T-cell (primary cell): ENCODE measurements at regions of chr6 and their contacts with region 1.

Region 1: DNA sequence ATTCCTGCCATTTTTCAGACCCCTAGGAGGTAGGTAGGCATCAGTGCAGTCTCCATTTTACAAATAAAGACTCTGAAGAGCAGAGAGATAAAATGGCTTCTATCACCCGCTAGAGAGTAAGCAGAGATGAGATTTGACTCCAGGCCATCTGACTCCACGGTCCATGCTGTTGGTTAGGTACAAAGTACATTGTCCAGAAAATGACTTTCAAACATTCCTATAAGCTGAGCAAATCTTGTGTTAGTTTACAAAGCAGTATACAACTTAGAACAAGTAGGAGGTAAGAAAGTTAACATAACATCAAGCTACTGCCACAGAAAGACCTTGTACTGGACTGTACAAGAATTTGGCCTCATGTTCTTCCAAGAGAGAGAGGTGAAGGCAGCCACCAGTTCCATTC is 14.9 kb downstream of the BTN1A1 start:
- DNase-seq: no peak
- ATAC-seq: no peak
- H3K4me3 ChIP-seq: no peak overlapping the region
- H3K4me3 Mint-ChIP-seq: no peak overlapping the region
- H3K27ac ChIP-seq: no peak overlapping the region
- H3K27ac Mint-ChIP-seq: no peak overlapping the region
- H3K4me1 ChIP-seq: peaks cover under 1 to 2% of the 10 kb centered on the region in 2 experiments
- H3K4me1 Mint-ChIP-seq: peaks cover 2 to 3% (median 3%) of the 10 kb centered on the region in 3 donors
- H3K27me3 ChIP-seq: no peaks in the 10 kb centered on the region
- H3K27me3 Mint-ChIP-seq: no peaks in the 10 kb centered on the region

Region 2: GRCh38 chr6:25556516-25556915 is 958.5 kb before region 1 on chr6:
- CTCF ChIA-PET with region 1: no interaction called
- POLR2A ChIA-PET with region 1: interaction called in 1 of 2 experiments, 15 read pairs
- DNase-seq: peak; percentile 30 to 85 (median 66)
- ATAC-seq: peak in 3 of 4 experiments; percentile 45 to 56 (median 48)
- H3K4me3 ChIP-seq: no peak overlapping the region
- H3K4me3 Mint-ChIP-seq: no peak overlapping the region
- H3K27ac ChIP-seq: no peak overlapping the region
- H3K27ac Mint-ChIP-seq: no peak overlapping the region
- H3K4me1 ChIP-seq: no peaks in the 10 kb centered on the region
- H3K4me1 Mint-ChIP-seq: peaks cover 0 to 2% (median 0%) of the 10 kb centered on the region in 3 donors
- H3K27me3 ChIP-seq: no peaks in the 10 kb centered on the region
- H3K27me3 Mint-ChIP-seq: no peaks in the 10 kb centered on the region

Region 3: GRCh38 chr6:26401987-26402658 is 112.9 kb before region 1 on chr6 and contains the start of gene BTN3A1:
- CTCF ChIA-PET with region 1: no interaction called
- POLR2A ChIA-PET with region 1: no interaction called
- DNase-seq: peak; percentile 17 to 82 (median 47)
- ATAC-seq: peak; percentile 87 to 92 (median 87)
- H3K4me3 ChIP-seq: peak within 1 kb of the TSS; percentile 85 to 86
- H3K4me3 Mint-ChIP-seq: peak within 1 kb of the TSS; percentile 98 to 99 (median 99)
- H3K27ac ChIP-seq: peak within 1 kb of the TSS; percentile 91
- H3K27ac Mint-ChIP-seq: peak within 1 kb of the TSS; percentile 99
- H3K4me1 ChIP-seq: peaks cover 33 to 41% of the 10 kb centered on the region in 2 experiments
- H3K4me1 Mint-ChIP-seq: peaks cover 52 to 68% (median 59%) of the 10 kb centered on the region in 3 donors
- H3K27me3 ChIP-seq: no peaks in the 10 kb centered on the region
- H3K27me3 Mint-ChIP-seq: no peaks in the 10 kb centered on the region
- total RNA-seq, gene BTN3A1: 205 to 270 (median 210) TPM

Region 4: GRCh38 chr6:26421259-26422144 is 93.5 kb before region 1 on chr6:
- CTCF ChIA-PET with region 1: interaction called in 1 of 2 experiments, 10 read pairs
- POLR2A ChIA-PET with region 1: no interaction called
- DNase-seq: peak in 34 of 35 experiments; percentile 5 to 81 (median 28)
- ATAC-seq: peak; percentile 92 to 99 (median 92)
- H3K4me3 ChIP-seq: peak overlapping the region; percentile 96
- H3K4me3 Mint-ChIP-seq: no peak overlapping the region
- H3K27ac ChIP-seq: peak overlapping the region; percentile 72
- H3K27ac Mint-ChIP-seq: peak overlapping the region in 1 of 2 donors; percentile 62
- H3K4me1 ChIP-seq: peaks cover 4 to 18% of the 10 kb centered on the region in 2 experiments
- H3K4me1 Mint-ChIP-seq: peaks cover 0 to 8% (median 4%) of the 10 kb centered on the region in 3 donors
- H3K27me3 ChIP-seq: no peaks in the 10 kb centered on the region
- H3K27me3 Mint-ChIP-seq: peaks cover 0 to 3% of the 10 kb centered on the region in 2 donors

Region 5: DNA sequence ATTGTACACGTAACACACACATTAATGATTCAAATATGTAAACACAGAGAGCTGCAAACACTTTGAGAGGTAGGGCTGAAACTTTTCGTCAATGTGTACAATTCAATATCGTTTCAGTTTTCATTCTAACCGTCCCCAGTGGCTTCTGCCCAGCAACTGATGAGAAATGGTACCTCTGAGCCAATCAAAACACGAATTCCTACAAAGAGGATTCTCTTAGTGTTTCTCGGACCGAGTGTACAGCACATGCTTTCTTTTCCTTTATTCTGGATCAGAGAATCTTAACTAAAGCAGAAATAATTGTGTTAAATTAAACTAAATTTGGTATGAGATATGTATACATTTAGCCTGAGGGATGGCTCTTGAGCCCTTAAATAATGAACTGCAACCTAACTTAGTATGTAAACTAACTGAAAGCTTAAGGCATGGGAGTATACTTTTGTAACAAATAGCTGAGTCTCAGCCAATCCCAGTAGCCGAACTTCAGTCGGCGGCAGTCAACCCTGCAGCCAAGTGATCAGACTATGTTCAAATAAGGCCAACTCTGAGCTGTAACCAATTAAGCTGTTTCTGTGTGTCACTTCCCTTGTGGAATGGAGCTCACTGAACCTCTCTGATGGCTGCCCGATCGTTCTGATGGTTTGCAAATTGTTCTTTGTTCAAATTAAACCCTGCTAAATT is 41.1 kb before region 1 on chr6:
- CTCF ChIA-PET with region 1: no interaction called
- POLR2A ChIA-PET with region 1: interaction called in 1 of 2 experiments, 12 read pairs
- DNase-seq: peak; percentile 50 to 93 (median 81)
- ATAC-seq: peak; percentile 95 to 96 (median 96)
- H3K4me3 ChIP-seq: peak overlapping the region; percentile 44 to 52
- H3K4me3 Mint-ChIP-seq: peak overlapping the region; percentile 88 to 99 (median 97)
- H3K27ac ChIP-seq: peak overlapping the region; percentile 90
- H3K27ac Mint-ChIP-seq: peak overlapping the region; percentile 100
- H3K4me1 ChIP-seq: peaks cover 25 to 43% of the 10 kb centered on the region in 2 experiments
- H3K4me1 Mint-ChIP-seq: peaks cover 63 to 66% (median 65%) of the 10 kb centered on the region in 3 donors
- H3K27me3 ChIP-seq: no peaks in the 10 kb centered on the region
- H3K27me3 Mint-ChIP-seq: no peaks in the 10 kb centered on the region

Region 6: GRCh38 chr6:26489996-26490964 is 24.7 kb before region 1 on chr6:
- CTCF ChIA-PET with region 1: no interaction called
- POLR2A ChIA-PET with region 1: no interaction called
- DNase-seq: no peak
- ATAC-seq: no peak
- H3K4me3 ChIP-seq: no peak overlapping the region
- H3K4me3 Mint-ChIP-seq: no peak overlapping the region
- H3K27ac ChIP-seq: no peak overlapping the region
- H3K27ac Mint-ChIP-seq: no peak overlapping the region
- H3K4me1 ChIP-seq: no peaks in the 10 kb centered on the region
- H3K4me1 Mint-ChIP-seq: peaks cover 0 to 18% (median 3%) of the 10 kb centered on the region in 3 donors
- H3K27me3 ChIP-seq: peaks cover 0 to 3% of the 10 kb centered on the region in 2 experiments
- H3K27me3 Mint-ChIP-seq: no peaks in the 10 kb centered on the region

Region 7: DNA sequence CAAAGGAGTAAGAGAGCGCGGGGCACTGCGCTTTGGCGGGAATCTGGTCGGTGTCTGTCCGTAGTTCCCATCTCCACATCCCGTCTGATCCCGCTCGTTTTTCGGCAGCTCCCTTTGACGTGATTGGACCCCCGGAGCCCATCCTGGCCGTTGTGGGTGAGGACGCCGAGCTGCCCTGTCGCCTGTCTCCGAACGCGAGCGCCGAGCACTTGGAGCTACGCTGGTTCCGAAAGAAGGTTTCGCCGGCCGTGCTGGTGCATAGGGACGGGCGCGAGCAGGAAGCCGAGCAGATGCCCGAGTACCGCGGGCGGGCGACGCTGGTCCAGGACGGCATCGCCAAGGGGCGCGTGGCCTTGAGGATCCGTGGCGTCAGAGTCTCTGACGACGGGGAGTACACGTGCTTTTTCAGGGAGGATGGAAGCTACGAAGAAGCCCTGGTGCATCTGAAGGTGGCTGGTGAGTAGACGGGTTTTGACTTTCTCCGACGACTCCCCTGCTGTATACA is 13.4 kb before region 1 on chr6:
- CTCF ChIA-PET with region 1: no interaction called
- POLR2A ChIA-PET with region 1: interaction called in 1 of 2 experiments, 10 read pairs
- DNase-seq: peak in 32 of 35 experiments; percentile 4 to 56 (median 22)
- ATAC-seq: peak; percentile 78 to 88 (median 86)
- H3K4me3 ChIP-seq: peak overlapping the region; percentile 38 to 71
- H3K4me3 Mint-ChIP-seq: peak overlapping the region; percentile 64 to 80 (median 70)
- H3K27ac ChIP-seq: no peak overlapping the region
- H3K27ac Mint-ChIP-seq: no peak overlapping the region
- H3K4me1 ChIP-seq: peaks cover 0 to 14% of the 10 kb centered on the region in 2 experiments
- H3K4me1 Mint-ChIP-seq: peaks cover 12 to 19% (median 18%) of the 10 kb centered on the region in 3 donors
- H3K27me3 ChIP-seq: peaks cover 2 to 29% of the 10 kb centered on the region in 2 experiments
- H3K27me3 Mint-ChIP-seq: peaks cover 14 to 33% of the 10 kb centered on the region in 2 donors

Region 8: DNA sequence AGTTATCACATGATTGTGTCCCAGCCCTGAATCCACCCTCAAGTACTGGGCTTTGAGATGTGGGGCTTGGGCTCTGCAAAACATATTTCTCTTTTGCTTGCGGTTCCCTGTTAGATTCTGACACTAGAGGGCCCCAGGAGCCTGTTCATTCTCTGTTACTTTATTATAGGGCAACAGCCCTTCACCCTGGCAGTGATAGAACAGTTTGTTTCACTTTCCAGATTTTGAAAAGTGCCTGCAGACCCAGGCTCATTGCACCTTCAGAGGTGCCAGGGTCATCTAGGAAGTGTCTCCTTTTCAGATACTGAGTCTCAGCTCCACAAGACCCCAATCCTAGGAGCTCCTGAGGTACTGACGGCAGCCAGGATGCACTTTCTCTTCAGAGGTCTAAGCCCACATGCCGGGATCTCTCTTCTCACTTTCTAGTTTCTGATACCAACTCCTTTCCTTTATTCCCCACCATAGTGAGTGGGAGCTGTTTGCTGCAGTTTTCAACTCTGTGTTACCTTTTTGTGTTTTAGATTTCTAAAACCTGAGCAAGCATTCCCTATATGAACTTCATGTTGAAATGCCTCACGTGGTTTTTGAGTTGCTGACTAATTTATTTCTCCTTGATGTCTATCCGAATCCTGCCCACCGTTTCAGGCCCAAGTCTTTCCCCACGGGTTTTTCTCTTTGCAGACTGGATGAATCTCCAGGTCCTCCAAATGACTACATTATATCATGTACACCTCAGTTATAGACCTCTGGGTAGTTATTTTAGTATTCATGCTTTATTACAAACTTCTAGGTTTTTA is 92.6 kb after region 1 on chr6:
- CTCF ChIA-PET with region 1: no interaction called
- POLR2A ChIA-PET with region 1: no interaction called
- DNase-seq: peak in 33 of 35 experiments; percentile 32 to 78 (median 50)
- ATAC-seq: peak; percentile 88 to 94 (median 94)
- H3K4me3 ChIP-seq: peak overlapping the region in 1 of 2 donors; percentile 20
- H3K4me3 Mint-ChIP-seq: peak overlapping the region; percentile 50 to 74 (median 68)
- H3K27ac ChIP-seq: no peak overlapping the region
- H3K27ac Mint-ChIP-seq: peak overlapping the region; percentile 76 to 89
- H3K4me1 ChIP-seq: no peaks in the 10 kb centered on the region
- H3K4me1 Mint-ChIP-seq: peaks cover 7 to 18% (median 10%) of the 10 kb centered on the region in 3 donors
- H3K27me3 ChIP-seq: peaks cover 4 to 8% of the 10 kb centered on the region in 2 experiments
- H3K27me3 Mint-ChIP-seq: peaks cover 0 to 8% of the 10 kb centered on the region in 2 donors